Calu3 (cell line): ENCODE measurements at regions of chr15 and their contacts with region 1.

Region 1: DNA sequence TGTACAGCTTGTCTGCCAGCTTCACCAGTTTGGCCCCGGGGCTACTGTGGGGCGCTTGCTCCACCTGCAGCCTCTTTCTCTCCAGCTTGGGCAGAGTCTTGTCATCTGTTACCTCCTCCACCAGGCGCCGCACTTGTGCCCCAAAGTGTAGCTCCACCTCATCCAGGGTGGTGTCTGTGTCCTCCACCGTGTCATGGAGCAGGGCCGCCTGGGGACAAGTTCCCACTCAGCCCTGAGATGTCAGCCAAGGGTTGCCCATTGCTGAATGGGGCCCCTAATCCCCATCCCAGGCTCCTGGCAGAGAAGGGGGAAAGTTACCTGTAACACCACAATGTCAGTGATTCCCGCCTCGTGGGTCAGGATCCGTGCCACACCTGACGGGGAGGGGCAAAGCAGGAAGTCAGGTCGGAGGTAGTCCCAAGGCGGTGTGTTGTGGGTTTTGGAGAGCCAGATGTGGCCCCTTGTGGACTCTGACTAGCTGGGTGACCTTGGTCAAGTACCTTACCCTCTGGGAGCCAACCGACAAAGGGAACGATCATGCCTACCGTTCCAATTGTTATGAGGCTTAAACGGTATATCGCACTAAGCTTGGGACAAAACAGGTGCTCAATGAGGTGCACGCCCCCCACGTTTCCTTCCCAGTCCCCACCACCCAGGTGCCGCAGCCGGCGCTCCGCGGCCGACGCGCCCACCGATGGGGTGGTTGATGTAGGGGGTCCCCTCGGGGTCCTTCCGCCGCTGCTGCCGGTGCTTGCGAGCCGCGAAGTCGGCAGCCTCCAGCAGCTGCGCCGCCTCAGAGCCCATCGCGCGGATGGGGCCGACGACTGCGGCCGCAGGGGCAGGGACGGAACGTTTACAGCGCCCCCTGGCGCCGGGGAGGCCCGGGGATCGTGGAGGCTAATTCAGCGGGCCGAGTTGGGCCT is at the start of gene HDDC3:
- DNase-seq: peak; percentile 98
- H3K4me3 Mint-ChIP-seq: peak within 1 kb of the TSS; percentile 92
- H3K27ac Mint-ChIP-seq: peak within 1 kb of the TSS; percentile 96
- H3K4me1 Mint-ChIP-seq: peaks cover 56% of the 10 kb centered on the region
- H3K27me3 Mint-ChIP-seq: no peaks in the 10 kb centered on the region
- CTCF ChIP-seq: peak; percentile 91
- total RNA-seq, gene HDDC3: 25.1 and 26.7 TPM in 2 replicates

Region 2: GRCh38 chr15:90291679-90292356 is 640.2 kb before region 1 on chr15:
- CTCF ChIA-PET with region 1: interaction called, 10 read pairs
- intact Hi-C with region 1: no loop called
- DNase-seq: peak; percentile 59
- H3K4me3 Mint-ChIP-seq: no peak overlapping the region
- H3K27ac Mint-ChIP-seq: no peak overlapping the region
- H3K4me1 Mint-ChIP-seq: peaks cover 11% of the 10 kb centered on the region
- H3K27me3 Mint-ChIP-seq: no peaks in the 10 kb centered on the region
- CTCF ChIP-seq: no peak

Region 3: GRCh38 chr15:90694987-90695386 is 237.0 kb before region 1 on chr15:
- CTCF ChIA-PET with region 1: no interaction called
- intact Hi-C with region 1: no loop called
- DNase-seq: no peak
- H3K4me3 Mint-ChIP-seq: no peak overlapping the region
- H3K27ac Mint-ChIP-seq: no peak overlapping the region
- H3K4me1 Mint-ChIP-seq: no peaks in the 10 kb centered on the region
- H3K27me3 Mint-ChIP-seq: no peaks in the 10 kb centered on the region
- CTCF ChIP-seq: no peak

Region 4: DNA sequence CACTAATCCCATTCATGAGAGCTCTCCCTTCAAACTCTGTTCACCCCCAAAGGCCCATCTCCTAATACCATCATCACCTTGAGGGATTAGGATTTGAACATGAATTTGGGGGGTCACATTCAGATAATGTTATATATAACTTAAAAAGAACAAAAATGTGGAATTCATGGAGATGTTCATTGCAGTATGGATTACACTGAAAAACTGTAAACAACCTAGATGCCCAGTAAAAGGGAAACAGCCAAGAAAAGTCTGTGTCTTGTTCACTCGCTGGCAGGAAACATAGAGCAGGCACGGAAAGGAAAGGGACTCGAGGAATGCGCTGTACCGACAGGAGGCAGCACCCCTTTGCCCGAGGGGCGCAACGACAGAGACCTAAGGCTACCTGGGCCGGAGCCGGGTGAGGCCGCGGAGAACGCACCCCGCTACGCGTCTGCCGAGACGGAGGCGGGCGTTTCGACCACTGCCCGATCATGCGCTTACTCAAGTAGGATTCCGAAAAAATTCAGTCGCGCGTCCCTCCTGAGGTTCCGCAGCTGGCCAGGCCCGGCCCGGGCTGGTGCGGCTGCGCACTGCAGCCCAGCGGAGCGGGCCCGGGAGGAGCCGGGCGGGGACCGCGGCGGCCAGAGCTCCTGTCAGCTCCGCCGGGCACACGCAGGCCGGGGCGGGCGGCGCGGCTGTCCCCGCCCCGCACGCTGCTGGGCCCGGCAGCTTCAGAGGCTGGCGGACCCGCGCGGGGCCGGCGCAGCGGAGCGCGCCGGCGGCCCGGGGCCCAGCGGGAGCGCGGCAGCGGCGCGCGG is 29.8 kb before region 1 on chr15:
- CTCF ChIA-PET with region 1: interaction called, 17 read pairs
- intact Hi-C with region 1: no loop called
- DNase-seq: peak; percentile 85
- H3K4me3 Mint-ChIP-seq: peak overlapping the region; percentile 91
- H3K27ac Mint-ChIP-seq: peak overlapping the region; percentile 65
- H3K4me1 Mint-ChIP-seq: peaks cover 10% of the 10 kb centered on the region
- H3K27me3 Mint-ChIP-seq: peaks cover 14% of the 10 kb centered on the region
- CTCF ChIP-seq: peak; percentile 80

Region 5: GRCh38 chr15:91032919-91033803 is 101.2 kb after region 1 on chr15:
- CTCF ChIA-PET with region 1: interaction called, 18 read pairs
- intact Hi-C with region 1: loop called (anchors 5 kb)
- DNase-seq: peak; percentile 94
- H3K4me3 Mint-ChIP-seq: peak overlapping the region; percentile 13
- H3K27ac Mint-ChIP-seq: no peak overlapping the region
- H3K4me1 Mint-ChIP-seq: peaks cover 11% of the 10 kb centered on the region
- H3K27me3 Mint-ChIP-seq: peaks cover 43% of the 10 kb centered on the region
- CTCF ChIP-seq: peak; percentile 73

Region 6: DNA sequence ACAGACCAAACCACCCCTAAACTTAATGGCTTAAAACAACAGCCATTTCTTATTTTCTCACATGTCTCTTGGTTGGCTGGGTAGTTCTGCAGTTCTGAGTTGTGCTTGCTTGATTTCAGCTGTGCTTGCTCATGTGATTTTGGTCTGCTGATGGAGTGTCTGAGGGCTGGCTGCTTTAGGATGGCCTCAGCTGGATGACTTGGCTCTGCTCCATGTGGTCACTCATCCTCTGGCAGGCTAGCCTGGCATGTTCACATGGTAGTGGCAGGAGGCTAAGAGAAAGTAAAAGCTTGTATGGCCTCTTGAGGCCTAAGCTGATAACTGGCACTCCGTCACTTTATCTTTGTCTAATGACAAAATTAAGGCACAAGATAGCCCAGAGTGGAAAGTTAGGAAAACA is 172.1 kb after region 1 on chr15:
- CTCF ChIA-PET with region 1: no interaction called
- intact Hi-C with region 1: no loop called
- DNase-seq: no peak
- H3K4me3 Mint-ChIP-seq: no peak overlapping the region
- H3K27ac Mint-ChIP-seq: no peak overlapping the region
- H3K4me1 Mint-ChIP-seq: peaks cover 40% of the 10 kb centered on the region
- H3K27me3 Mint-ChIP-seq: peaks cover 42% of the 10 kb centered on the region
- CTCF ChIP-seq: no peak

Region 7: GRCh38 chr15:91150502-91151160 is 218.6 kb after region 1 on chr15:
- CTCF ChIA-PET with region 1: no interaction called
- intact Hi-C with region 1: no loop called
- DNase-seq: no peak
- H3K4me3 Mint-ChIP-seq: no peak overlapping the region
- H3K27ac Mint-ChIP-seq: no peak overlapping the region
- H3K4me1 Mint-ChIP-seq: no peaks in the 10 kb centered on the region
- H3K27me3 Mint-ChIP-seq: peaks cover 99% of the 10 kb centered on the region
- CTCF ChIP-seq: no peak

Region 8: DNA sequence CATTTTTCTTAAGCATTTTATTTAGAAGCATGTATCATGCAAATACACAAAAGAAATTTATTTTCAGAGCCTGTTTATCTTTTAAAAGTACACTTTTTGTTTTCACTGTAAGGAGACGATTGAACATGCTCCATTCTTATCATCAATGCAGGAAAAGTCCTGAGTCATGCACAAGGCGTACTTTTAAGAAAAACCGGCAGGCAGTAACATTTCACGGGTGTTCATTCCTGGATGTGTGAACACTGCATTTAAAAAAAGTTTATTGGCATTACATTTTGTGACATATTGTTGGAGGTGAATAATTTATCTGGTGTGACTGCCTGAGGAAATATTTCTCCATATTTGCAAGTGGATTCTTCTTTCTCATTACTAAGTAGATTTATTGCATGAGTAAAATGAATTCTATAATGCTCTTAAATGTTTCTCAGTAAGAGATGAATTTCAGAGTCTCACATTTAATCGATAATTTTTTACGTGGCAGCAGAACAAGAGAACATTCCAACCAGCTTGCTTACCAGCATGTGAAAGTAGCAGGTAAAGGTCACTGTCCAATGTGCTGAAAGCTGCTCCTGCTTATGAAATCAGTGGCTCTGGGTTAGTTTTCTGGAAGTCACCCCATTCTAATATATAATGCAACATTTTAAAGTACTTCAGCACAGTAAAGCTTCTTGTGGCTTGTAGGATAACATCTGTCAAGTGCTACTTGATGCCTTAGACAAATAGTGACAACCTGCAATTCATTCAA is 255.1 kb after region 1 on chr15:
- CTCF ChIA-PET with region 1: no interaction called
- intact Hi-C with region 1: no loop called
- DNase-seq: peak; percentile 47
- H3K4me3 Mint-ChIP-seq: no peak overlapping the region
- H3K27ac Mint-ChIP-seq: no peak overlapping the region
- H3K4me1 Mint-ChIP-seq: peaks cover 10% of the 10 kb centered on the region
- H3K27me3 Mint-ChIP-seq: peaks cover 55% of the 10 kb centered on the region
- CTCF ChIP-seq: no peak

Region 9: GRCh38 chr15:91271565-91272153 is 339.7 kb after region 1 on chr15:
- CTCF ChIA-PET with region 1: interaction called, 18 read pairs
- intact Hi-C with region 1: no loop called
- DNase-seq: peak; percentile 67
- H3K4me3 Mint-ChIP-seq: no peak overlapping the region
- H3K27ac Mint-ChIP-seq: no peak overlapping the region
- H3K4me1 Mint-ChIP-seq: no peaks in the 10 kb centered on the region
- H3K27me3 Mint-ChIP-seq: peaks cover 68% of the 10 kb centered on the region
- CTCF ChIP-seq: peak; percentile 78